Mammary epithelial cell (primary cell): ENCODE measurements at regions of chr1 and their contacts with region 1.

Region 1: DNA sequence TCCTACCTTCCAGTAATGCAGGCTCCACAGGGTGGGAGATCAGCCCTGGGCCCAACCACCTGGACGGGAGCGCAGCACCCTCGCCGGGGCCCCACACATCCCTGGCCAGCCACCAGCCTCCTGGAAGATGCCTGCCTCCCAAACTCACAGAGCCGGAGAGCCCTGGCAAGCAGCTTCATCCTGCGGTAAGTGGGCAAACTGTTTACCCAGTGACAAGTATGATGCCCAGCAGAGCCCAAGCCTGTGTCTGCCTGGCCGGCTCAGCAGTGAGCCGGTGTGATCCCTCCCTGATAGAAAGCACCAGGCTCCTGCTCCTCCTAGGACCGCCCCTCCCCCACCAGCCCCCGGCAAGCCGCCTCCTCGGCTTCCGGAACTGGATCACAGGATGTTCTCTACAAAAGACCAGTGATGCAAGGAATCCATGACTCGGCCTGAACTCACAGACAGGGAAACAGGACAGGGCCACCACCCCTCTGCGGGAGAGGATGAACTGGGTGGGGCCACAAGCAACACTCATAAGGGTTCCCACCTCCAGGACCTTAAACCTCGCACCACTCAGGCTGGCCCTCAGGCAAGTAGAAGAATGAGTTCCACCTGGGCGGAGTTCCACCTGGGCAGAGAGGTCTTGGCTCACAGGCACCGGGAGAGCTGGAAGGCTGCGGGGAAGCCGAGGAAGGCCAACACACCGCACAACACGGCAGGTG is 7.9 kb downstream of the ACOT7 start:
- DNase-seq: peak; percentile 99
- H3K4me3 ChIP-seq: peak overlapping the region; percentile 52 to 65 (median 60)
- H3K27ac ChIP-seq: peak overlapping the region; percentile 84
- H3K4me1 ChIP-seq: peaks cover 34% of the 10 kb centered on the region
- H3K27me3 ChIP-seq: no peaks in the 10 kb centered on the region
- CTCF ChIP-seq: no peak

Region 2: GRCh38 chr1:6171548-6172119 is 214.0 kb before region 1 on chr1:
- CTCF ChIA-PET with region 1: no interaction called
- dilution Hi-C with region 1: no loop called
- in situ Hi-C with region 1: no loop called
- intact Hi-C with region 1: no loop called
- DNase-seq: no peak
- H3K4me3 ChIP-seq: no peak overlapping the region
- H3K27ac ChIP-seq: no peak overlapping the region
- H3K4me1 ChIP-seq: peaks cover 4% of the 10 kb centered on the region
- H3K27me3 ChIP-seq: peaks cover 1% of the 10 kb centered on the region
- CTCF ChIP-seq: peak; percentile 22 to 57

Region 3: DNA sequence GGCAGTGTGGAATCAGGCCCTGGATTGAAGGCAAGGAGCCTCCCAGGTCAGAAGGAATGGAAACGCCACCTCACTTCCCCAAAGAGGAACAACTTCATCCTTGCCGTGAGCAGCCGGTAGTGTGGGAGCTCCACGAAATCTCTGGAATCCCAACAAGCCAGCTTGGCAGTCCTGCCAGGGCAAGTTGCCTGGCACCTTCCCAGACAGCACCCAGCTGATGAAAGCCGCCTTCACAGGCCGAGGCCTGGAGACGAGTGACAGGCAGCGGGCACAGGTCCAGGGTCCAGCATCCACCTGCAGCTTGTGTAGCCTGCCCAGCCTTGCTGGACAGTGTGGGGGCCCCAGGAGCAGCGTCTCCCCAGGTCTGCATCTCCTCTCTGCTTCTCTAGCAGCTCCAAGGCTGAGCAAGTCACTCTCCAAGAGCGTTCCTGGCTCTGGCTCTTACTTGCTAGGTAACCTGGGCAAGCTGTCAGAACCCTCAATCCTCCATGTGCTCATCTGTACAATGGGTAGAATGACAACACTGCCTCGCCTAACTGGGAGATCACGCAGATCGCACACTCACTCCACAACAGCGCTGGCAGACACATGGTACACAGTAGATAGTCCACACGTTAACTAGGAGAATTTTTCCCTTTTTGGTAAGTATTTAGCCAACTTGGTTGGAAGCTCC is 35.1 kb before region 1 on chr1:
- CTCF ChIA-PET with region 1: no interaction called
- dilution Hi-C with region 1: no loop called
- in situ Hi-C with region 1: loop called in 1 of 2 experiments (anchors 5 kb)
- intact Hi-C with region 1: no loop called
- DNase-seq: peak; percentile 90
- H3K4me3 ChIP-seq: no peak overlapping the region
- H3K27ac ChIP-seq: peak overlapping the region; percentile 25
- H3K4me1 ChIP-seq: peaks cover 81% of the 10 kb centered on the region
- H3K27me3 ChIP-seq: no peaks in the 10 kb centered on the region
- CTCF ChIP-seq: no peak

Region 4: GRCh38 chr1:6367381-6368012 is 18.1 kb before region 1 on chr1:
- CTCF ChIA-PET with region 1: no interaction called
- dilution Hi-C with region 1: no loop called
- in situ Hi-C with region 1: no loop called
- intact Hi-C with region 1: loop called (anchors 1 kb)
- DNase-seq: peak; percentile 100
- H3K4me3 ChIP-seq: no peak overlapping the region
- H3K27ac ChIP-seq: peak overlapping the region; percentile 83
- H3K4me1 ChIP-seq: peaks cover 46% of the 10 kb centered on the region
- H3K27me3 ChIP-seq: no peaks in the 10 kb centered on the region
- CTCF ChIP-seq: no peak

Region 5: GRCh38 chr1:6414443-6414844 is 28.8 kb after region 1 on chr1:
- CTCF ChIA-PET with region 1: no interaction called
- dilution Hi-C with region 1: no loop called
- in situ Hi-C with region 1: no loop called
- intact Hi-C with region 1: loop called (anchors 1 kb)
- DNase-seq: peak; percentile 100
- H3K4me3 ChIP-seq: no peak overlapping the region
- H3K27ac ChIP-seq: peak overlapping the region; percentile 96
- H3K4me1 ChIP-seq: peaks cover 51% of the 10 kb centered on the region
- H3K27me3 ChIP-seq: no peaks in the 10 kb centered on the region
- CTCF ChIP-seq: peak; percentile 62 to 73